ENCODE measurements at regions of chr11 and their contacts with region 1.

Region 1: DNA sequence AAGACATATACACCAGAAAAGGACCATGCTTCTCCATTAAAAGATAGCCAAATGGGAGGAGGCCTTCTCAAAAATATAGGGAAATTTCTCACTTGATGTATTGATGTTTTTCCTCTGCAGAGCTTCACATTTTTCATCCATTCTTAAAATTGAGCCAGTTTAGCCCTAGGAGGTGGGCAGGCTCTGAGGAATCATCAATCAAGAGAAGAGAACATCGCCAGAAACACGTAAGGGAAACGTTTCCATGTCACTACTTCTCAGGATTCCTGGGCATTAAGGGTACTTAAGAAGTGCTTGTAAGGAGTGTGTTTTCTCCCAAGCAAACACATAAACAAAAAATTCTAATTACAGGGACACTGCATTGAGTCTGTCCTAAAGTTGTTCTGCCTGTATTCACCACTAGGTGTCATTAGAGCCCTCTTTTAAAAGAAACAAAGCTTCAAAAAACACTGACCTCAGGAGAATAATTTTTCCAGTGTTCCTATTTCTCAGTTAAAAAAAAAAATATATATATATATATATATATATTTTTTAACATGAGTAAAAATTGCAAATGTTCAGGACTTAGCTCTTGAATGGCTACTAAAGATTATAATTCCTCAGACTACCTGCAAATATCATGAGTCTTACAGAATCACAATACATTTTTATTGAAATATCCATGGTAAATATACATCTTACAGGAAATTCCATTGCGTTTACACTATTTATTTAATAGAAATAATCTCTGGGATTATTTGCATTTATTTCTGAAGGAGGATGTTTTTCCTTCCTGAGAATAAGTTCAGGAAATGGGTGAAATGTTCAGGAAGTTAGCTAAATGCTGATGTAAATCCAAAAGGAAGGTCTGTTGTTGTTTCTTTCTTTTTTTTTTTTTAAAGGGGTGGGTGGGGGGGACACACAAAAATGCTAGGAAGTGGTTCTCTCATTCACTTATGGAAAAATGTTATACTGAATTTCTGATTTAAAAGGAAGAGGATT is 16.0 kb downstream of the FZD4 start:
- DNase-seq: peak; percentile 63

Region 2: DNA sequence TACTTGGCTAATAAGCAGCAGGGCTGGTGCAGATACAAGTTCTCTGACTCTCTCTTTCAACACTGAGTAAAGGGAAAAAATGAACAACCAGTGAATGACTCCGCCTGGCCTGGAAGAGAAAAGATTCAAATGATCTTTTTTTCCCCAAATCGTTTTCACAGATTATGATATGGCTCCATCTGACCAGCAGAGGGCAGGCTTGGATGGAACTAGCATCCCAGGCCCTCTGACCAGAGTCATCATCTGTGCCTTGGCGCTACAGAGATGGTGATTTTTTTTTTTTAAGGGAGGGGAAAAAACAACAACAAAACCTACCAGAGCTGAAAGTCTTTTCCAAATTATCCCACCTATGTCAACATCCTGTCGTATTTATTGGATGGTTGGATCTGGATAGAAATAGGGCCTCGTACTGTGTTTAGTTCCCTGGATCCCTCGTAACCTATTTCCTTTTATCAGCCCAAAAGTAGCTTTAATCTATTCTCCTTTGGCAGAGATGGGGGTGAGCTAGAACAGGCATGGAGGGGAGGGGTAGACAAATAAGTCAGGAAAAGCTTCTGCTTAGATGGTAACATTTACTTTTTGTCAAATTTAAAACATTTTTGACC is 69.1 kb before region 1 on chr11:
- in situ Hi-C with region 1: no loop called
- DNase-seq: peak; percentile 65

Region 3: GRCh38 chr11:87213444-87213843 is 274.3 kb after region 1 on chr11:
- in situ Hi-C with region 1: no loop called
- DNase-seq: no peak

Region 4: GRCh38 chr11:87251560-87251959 is 312.4 kb after region 1 on chr11:
- in situ Hi-C with region 1: no loop called
- DNase-seq: no peak

Region 5: GRCh38 chr11:87300640-87301380 is 361.6 kb after region 1 on chr11:
- in situ Hi-C with region 1: loop called (anchors 25 kb)
- DNase-seq: no peak

Region 6: GRCh38 chr11:87368858-87369480 is 429.8 kb after region 1 on chr11:
- in situ Hi-C with region 1: no loop called
- DNase-seq: no peak